Ascending aorta (tissue), 2 donors: ENCODE measurements at regions of chr20 and their contacts with region 1.

Region 1: GRCh38 chr20:31474758-31475427 is at the starts of genes DEFB124 and REM1:
- DNase-seq: peak in 1 of 2 donors; percentile 77
- H3K4me3 ChIP-seq: peak within 1 kb of the TSS; percentile 62 to 82
- H3K27ac ChIP-seq: peak within 1 kb of the TSS; percentile 79 to 82
- H3K4me1 ChIP-seq: peaks cover 0 to 2% of the 10 kb centered on the region in 2 donors
- H3K27me3 ChIP-seq: no peaks in the 10 kb centered on the region
- CTCF ChIP-seq: no peak
- total RNA-seq, gene DEFB124: not detected
- total RNA-seq, gene REM1: 31.0 TPM

Region 2: GRCh38 chr20:31494131-31494530 is 19.2 kb after region 1 on chr20:
- intact Hi-C with region 1: loop called (anchors 1 kb)
- DNase-seq: no peak
- H3K4me3 ChIP-seq: no peak overlapping the region
- H3K27ac ChIP-seq: no peak overlapping the region
- H3K4me1 ChIP-seq: peaks cover 0 to 18% of the 10 kb centered on the region in 2 donors
- H3K27me3 ChIP-seq: no peaks in the 10 kb centered on the region
- CTCF ChIP-seq: peak in 1 of 3 experiments; percentile 28